A549 (cell line): ENCODE measurements at regions of chr2 and their contacts with region 1.

Region 1: GRCh38 chr2:20051532-20052228 is at the start of gene LAPTM4A:
- DNase-seq: peak; percentile 99 to 100
- ATAC-seq: peak; percentile 95 to 97
- H3K4me3 ChIP-seq: peak within 1 kb of the TSS; percentile 63
- H3K27ac ChIP-seq: peak within 1 kb of the TSS; percentile 92 to 96
- H3K4me1 ChIP-seq: peaks cover 31% of the 10 kb centered on the region
- CTCF ChIP-seq: no peak
- EP300 ChIP-seq: no peak
- POLR2A ChIP-seq: peak; percentile 67
- RAD21 ChIP-seq: no peak
- polyA plus RNA-seq, gene LAPTM4A: 509 and 655 TPM in 2 replicates

Region 2: DNA sequence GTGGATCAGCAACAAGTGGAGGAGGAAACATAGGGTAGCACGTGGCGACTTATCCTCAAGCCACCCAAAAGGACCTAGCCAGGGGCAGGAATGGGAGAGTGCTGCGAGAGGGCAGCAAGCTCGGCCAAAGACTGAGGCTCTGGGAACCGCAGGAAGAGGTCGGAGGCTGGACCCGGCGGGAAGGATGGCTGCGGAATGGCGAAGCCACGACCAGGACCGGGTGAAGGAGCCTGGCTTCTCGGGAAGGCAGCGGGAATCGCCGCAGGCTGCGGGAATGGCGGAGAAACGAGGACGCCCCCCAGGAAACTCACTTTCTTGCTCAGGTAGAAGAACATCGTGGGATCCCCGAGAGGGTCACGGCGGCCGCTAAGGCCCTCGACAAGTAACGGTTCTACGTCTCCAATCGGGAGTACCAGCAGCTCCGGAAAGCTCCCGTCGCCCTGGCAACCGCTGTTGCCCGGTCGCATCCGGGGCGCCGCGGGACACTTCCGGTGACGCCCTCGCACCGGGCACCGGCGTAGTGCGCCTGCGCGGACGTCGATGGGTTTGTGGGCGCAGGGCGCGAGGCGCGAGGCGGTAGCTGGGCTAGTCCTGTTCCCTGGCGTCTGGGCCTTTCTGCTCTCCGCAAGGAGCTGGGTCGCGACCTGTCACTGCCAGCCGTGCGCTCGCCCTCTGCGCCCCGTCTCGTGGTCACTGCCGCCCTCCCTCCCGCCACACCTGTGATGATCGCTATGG is 61.8 kb before region 1 on chr2 and contains the start of gene WDR35:
- CTCF ChIA-PET with region 1: no interaction called
- POLR2A ChIA-PET with region 1: interaction called, 16 read pairs
- DNase-seq: peak; percentile 94 to 98
- ATAC-seq: peak; percentile 98
- H3K4me3 ChIP-seq: peak within 1 kb of the TSS; percentile 68
- H3K27ac ChIP-seq: peak within 1 kb of the TSS; percentile 73 to 89
- H3K4me1 ChIP-seq: peaks cover 17% of the 10 kb centered on the region
- CTCF ChIP-seq: no peak
- EP300 ChIP-seq: no peak
- POLR2A ChIP-seq: peak; percentile 99
- RAD21 ChIP-seq: no peak
- polyA plus RNA-seq, gene WDR35: 24.6 and 28.5 TPM in 2 replicates

Region 3: GRCh38 chr2:20027705-20028434 is 23.8 kb before region 1 on chr2:
- CTCF ChIA-PET with region 1: interaction called, 4 read pairs
- POLR2A ChIA-PET with region 1: interaction called, 12 read pairs
- DNase-seq: no peak
- ATAC-seq: no peak
- H3K4me3 ChIP-seq: no peak overlapping the region
- H3K27ac ChIP-seq: peak overlapping the region; percentile 8 to 40; a peak in 4 of 6 replicates
- H3K4me1 ChIP-seq: peaks cover 13% of the 10 kb centered on the region
- CTCF ChIP-seq: no peak
- EP300 ChIP-seq: no peak
- POLR2A ChIP-seq: no peak
- RAD21 ChIP-seq: no peak

Region 4: DNA sequence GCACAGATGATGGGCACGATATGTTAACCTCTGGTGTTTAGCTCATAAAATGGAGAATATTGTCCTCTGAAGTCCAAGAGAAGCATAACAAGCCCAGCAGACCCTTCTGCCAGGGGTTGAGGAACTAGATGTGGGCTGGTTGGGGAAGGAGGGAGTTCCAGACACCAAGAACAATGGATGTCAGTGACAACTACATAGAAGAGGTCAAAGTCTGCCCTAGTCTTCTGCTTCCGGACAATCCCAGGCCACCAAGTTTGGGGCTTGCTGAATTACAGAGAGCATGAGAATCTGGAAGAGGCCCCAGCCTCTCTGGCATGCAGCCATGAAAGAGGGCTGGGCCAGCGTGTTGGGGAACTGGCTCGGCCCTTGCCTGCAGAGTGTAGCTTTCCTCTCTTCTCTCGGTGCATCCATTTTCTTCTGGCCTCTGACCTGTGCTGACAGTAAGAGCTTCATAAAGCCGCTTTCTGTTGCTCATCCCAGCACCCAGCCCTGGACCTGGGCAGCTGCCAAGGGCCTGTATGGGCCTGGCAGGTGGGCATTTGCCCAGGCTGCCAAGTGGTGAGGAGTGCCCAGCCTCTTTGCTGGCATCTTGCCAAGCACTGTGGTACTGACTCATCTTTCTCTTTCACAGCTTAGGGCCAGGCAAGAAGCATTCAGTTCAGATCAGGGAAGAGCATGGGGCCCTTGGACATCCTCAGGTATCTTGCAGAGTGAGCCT is 14.4 kb after region 1 on chr2:
- CTCF ChIA-PET with region 1: interaction called, 7 read pairs
- POLR2A ChIA-PET with region 1: interaction called, 30 read pairs
- DNase-seq: peak; percentile 77 to 86
- ATAC-seq: peak; percentile 86 to 88
- H3K4me3 ChIP-seq: no peak overlapping the region
- H3K27ac ChIP-seq: peak overlapping the region; percentile 55 to 81
- H3K4me1 ChIP-seq: peaks cover 36% of the 10 kb centered on the region
- CTCF ChIP-seq: no peak
- EP300 ChIP-seq: no peak; a peak in 1 of 5 replicates
- POLR2A ChIP-seq: no peak
- RAD21 ChIP-seq: peak in 1 of 2 experiments; percentile 20; a peak in 1 of 5 replicates

Region 5: DNA sequence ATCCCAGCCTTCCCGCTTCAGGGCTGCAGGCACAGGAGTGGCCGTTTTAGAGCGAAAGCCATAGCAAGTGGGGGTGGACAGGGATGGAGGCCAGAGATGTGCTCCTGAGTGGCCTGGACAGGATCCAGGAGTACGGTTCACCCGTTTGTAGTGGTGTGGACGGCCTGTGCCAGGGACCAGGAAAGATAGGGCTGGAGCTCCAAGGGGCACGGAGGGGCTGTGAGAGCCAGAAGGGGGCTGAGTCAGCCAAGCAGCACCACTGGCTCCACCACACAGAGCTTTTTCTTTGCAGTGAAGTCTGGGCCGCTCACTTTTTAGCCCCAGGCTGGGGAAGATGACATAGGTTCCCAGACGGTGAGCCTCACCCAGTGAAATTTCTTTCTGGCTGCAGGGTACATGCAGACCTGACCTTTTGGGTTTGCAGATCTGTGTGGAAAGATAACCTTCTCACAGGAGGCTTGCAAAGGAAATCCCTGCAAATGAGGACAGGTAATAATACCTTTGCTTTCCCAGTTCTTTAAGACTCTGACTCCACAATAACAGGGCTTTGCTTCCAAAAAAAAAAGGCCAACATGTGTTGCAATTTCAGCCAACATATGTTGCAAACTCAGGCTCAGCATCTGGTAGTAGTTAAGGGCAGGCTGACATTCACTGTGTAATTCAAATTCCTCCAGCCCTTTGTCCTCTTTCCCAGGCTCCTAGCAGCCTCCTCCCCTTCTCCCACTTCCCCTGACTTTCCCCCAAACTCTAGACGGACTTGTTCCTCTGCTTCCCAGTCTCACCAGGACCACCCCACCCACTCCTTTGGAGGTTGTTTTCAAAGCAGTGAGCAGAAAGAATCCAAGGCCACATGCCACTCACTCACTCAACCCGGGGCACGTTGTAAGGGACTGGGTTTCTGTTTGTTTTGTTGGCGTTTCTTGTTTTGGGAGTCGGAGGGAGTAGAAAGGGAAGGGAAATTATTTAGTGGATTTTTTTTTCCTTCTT is 20.0 kb after region 1 on chr2:
- CTCF ChIA-PET with region 1: interaction called, 5 read pairs
- POLR2A ChIA-PET with region 1: interaction called, 30 read pairs
- DNase-seq: peak; percentile 59 to 84
- ATAC-seq: peak; percentile 87 to 92
- H3K4me3 ChIP-seq: no peak overlapping the region
- H3K27ac ChIP-seq: peak overlapping the region; percentile 85 to 88
- H3K4me1 ChIP-seq: peaks cover 47% of the 10 kb centered on the region
- CTCF ChIP-seq: no peak
- EP300 ChIP-seq: peak in 1 of 2 experiments; percentile 70; a peak in 2 of 5 replicates
- POLR2A ChIP-seq: no peak
- RAD21 ChIP-seq: peak in 1 of 2 experiments; percentile 30; a peak in 1 of 5 replicates

Region 6: DNA sequence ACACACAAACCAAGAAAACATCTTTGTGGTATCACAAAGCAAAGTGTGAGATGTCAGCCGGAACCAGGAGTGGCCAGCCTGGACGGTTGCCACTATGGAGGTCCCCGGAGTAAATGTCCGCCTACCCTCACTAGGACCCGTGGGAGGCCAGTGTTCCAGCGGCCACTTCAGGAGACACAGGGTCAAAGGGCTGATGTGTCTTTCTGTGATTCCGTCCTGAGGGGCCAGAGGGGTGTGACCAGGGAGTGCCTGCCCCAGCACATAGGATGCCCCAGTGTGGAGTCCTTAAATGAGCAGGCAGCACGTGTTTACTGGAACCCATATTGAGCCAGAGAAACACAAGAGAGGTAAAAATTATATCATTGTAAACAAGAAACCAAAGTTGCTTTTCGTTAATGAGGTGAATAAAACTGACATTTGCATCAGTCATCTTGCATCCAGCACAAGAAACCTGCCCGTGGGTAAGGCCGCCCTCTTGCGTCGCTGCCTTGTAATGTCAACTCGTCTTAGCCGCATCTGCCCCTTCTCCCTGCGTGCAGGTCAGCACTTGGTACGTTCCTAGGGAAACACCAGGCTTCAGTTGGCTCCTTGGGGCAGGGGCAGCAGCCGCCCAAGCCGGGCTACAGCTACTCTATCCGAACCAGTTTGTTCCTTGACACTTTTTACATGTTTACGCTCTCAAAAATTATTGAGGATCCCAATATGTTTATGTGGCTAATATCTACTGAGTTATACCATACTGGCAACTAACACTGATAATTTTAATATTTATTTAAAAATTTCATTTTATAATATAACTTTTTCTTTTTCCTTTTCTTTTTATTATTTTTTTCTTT is 46.4 kb after region 1 on chr2:
- CTCF ChIA-PET with region 1: interaction called, 13 read pairs
- POLR2A ChIA-PET with region 1: interaction called, 48 read pairs
- DNase-seq: peak; percentile 93 to 96
- ATAC-seq: peak; percentile 84 to 90
- H3K4me3 ChIP-seq: no peak overlapping the region
- H3K27ac ChIP-seq: peak overlapping the region; percentile 22 to 71; a peak in 4 of 6 replicates
- H3K4me1 ChIP-seq: peaks cover 18% of the 10 kb centered on the region; the same call in 2 of the 3 replicates
- CTCF ChIP-seq: peak; percentile 99
- EP300 ChIP-seq: no peak
- POLR2A ChIP-seq: no peak
- RAD21 ChIP-seq: peak; percentile 99 to 100

Region 7: GRCh38 chr2:20424300-20425290 is 372.9 kb after region 1 on chr2:
- CTCF ChIA-PET with region 1: no interaction called
- POLR2A ChIA-PET with region 1: no interaction called
- DNase-seq: no peak
- ATAC-seq: 0 out of 6 replicates have a peak, but pooled peaks of 1 of the 2 experiments have one; percentile 10
- H3K4me3 ChIP-seq: no peak overlapping the region
- H3K27ac ChIP-seq: peak overlapping the region in 1 of 2 experiments; percentile 3; a peak in 1 of 6 replicates
- H3K4me1 ChIP-seq: 0 out of 3 replicates have a peak, but pooled peaks cover 2% of the 10 kb centered on the region
- CTCF ChIP-seq: no peak
- EP300 ChIP-seq: no peak
- POLR2A ChIP-seq: no peak
- RAD21 ChIP-seq: no peak